H1 (cell line): ENCODE measurements at regions of chr9 and their contacts with region 1.

Region 1: GRCh38 chr9:107044872-107045271 is 181.9 kb downstream of the ZNF462 start:
- DNase-seq: peak in 1 of 2 experiments; percentile 62
- H3K4me3 ChIP-seq: no peak overlapping the region
- H3K27ac ChIP-seq: no peak overlapping the region
- H3K4me1 ChIP-seq: peaks cover 0 to 7% (median 5%) of the 10 kb centered on the region in 4 experiments; a peak in 6 of 7 replicates
- H3K27me3 ChIP-seq: no peaks in the 10 kb centered on the region; a peak in 1 of 7 replicates
- CTCF ChIP-seq: peak; percentile 20 to 43 (median 21); a peak in 3 of 4 replicates
- EP300 ChIP-seq: no peak
- POLR2A ChIP-seq: no peak
- RAD21 ChIP-seq: peak; percentile 28 to 40; a peak in 2 of 4 replicates

Region 2: DNA sequence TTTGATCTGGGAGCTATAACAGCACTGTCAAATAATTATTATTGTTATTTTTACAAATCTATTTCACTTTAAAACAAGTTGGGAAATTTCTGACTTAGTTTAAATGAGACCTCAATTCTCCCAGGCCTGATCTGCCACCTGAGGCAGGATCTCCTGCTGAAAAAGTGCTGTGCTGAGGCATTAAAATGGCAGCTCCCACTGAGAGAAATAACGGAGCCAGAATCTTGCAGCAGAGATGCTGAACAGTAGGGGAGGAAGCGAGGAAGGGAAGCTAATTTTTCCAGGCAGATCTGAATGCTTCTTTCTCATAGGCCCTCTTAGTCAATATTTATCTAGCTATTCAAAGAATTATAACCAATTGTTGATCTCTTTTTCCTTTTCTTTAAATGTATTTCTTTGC is 14.3 kb after region 1 on chr9:
- CTCF ChIA-PET with region 1: interaction called, 22 read pairs
- POLR2A ChIA-PET with region 1: interaction called, 3 read pairs
- DNase-seq: no peak
- H3K4me3 ChIP-seq: no peak overlapping the region
- H3K27ac ChIP-seq: no peak overlapping the region
- H3K4me1 ChIP-seq: peaks cover 0 to 2% (median 0%) of the 10 kb centered on the region in 4 experiments; a peak in 1 of 7 replicates
- H3K27me3 ChIP-seq: no peaks in the 10 kb centered on the region
- CTCF ChIP-seq: no peak
- EP300 ChIP-seq: no peak
- POLR2A ChIP-seq: no peak
- RAD21 ChIP-seq: no peak